Head of caudate nucleus (tissue), 42 donors: ENCODE measurements at regions of chr2 and their contacts with region 1.

Region 1: GRCh38 chr2:27370026-27370815 is at the starts of genes EIF2B4 and SNX17:
- DNase-seq: peak; percentile 97 to 100 (median 100)

Region 2: GRCh38 chr2:27211829-27212627 is 158.2 kb before region 1 on chr2 and contains the starts of genes ATRAID and SLC5A6:
- intact Hi-C with region 1: loop called (anchors 5 kb)
- DNase-seq: peak; percentile 65 to 95 (median 91)

Region 3: DNA sequence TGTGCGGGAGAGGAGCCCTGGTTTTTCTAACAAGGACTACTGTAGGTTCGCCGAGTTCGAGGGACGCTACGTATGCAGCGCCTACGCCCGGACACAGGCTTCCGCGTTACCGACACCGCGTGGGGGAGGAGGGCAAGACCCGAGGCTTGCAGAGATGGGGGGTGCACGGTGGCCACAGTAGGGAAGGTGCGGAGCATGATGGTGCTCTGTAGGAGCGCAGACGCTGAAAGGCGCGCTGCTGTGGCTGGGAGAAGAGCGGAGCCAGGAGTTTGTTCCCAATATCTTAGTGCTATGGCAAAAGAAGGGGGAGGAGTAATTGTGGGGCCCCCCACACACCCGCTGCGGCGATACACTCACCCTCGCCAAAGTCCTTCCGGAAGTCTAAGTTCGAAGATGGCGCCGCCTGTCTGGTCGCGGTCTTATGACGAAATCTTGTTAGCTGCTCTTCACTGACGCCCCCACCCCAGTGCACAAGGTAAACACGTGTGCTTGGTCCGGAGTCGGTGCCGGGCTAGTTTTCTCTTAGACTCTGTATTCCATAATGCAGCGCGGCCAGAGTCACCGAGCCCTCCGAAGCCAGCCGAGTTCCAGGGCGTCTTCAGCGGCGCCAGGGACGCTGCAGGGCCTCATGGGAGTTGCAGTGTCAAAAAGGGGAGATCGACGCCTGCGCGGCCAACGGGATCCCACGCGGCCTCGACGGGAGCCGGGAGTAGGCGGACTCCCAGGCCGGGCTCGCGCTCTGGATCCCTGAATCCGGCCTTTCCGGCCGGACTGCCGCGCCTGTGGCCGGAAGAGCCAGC is 13.6 kb before region 1 on chr2 and contains the start of gene GTF3C2:
- intact Hi-C with region 1: loop called (anchors 2 kb)
- DNase-seq: peak; percentile 88 to 98 (median 95)

Region 4: DNA sequence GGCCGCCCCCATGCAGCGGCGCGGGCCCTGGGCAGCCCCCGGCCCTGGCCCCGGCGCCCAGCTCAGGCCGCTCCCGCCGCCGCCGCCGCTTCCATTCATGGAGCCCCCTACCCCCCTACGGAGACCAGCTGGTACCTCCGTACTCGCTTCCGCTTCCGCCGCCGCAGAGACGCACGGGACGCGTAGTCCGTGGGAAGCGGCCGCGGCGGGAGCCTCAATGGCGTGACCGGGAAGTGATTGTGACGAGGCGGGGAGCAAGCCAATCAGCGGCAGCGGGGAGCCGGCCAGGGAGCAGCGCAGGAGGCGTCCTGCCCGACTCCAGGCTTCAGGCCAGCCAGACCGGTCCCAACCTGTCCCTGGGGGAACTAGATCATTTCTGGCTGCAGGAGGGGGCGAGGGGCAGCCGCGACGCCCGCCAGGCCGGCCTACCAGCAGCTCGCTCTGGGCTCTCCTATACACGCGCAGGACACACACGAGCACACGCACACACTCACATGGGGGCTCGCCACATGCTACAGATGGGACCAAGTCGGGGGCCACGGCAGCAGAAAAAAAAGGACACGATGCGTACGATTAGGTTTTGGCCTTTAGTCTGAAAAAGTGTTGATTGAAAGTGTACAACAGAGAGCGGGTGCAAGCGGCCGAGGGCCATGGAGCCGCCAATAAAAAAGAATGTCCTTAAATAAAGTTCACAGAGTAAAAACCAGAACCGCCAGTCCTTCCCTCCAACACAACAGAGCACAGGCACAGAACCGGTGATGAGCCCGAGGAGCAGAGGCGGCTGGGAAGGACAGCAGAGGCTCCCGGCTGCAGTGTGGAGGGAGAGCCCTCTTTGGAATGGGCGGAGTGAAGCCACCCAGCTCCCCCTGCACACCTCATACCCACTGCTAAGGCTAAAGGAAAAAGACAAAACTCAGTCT is 10.7 kb after region 1 on chr2 and contains the start of gene ZNF513:
- intact Hi-C with region 1: loop called (anchors 1 kb)
- DNase-seq: peak; percentile 95 to 99 (median 98)